ENCODE measurements at regions of chr11 and their contacts with region 1.

Region 1: DNA sequence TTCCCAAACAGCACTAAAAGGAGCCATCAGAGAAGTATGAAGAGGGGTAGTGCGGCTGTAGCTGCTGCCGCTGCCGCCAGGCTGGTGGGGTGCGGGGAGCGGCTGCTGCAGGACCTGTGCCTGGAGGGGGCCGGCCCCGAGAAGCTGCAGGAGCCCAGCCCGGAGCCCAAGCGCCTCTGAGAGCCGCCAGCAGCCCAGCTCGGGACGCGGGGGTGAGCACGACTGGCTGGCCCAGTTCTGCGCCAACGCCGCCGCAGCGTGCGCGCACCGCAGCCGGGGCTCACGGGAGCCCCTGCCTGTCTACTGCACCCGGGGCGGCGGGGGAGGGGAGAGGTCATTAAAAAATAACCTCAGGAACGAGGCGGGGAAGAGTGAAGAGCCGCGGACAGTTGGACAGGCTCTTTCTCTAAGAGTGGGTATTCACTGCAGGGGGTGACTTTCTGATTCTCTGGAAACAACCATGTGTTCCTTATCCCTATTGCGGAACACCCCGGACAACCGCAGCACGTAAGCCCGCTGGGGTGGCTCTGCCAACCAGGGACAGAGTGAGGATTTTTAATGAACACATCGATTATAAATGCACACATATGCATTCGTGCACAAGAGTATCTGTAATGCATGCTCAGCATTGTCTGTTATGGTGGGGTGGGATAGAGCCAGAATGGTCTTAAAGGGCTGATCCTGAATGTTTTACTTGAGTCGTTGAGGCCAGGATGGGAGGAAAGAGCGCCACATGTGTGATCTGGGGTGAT is 453 bp downstream of the GAS2 start:
- DNase-seq: peak; percentile 38 to 95 (median 64)

Region 2: DNA sequence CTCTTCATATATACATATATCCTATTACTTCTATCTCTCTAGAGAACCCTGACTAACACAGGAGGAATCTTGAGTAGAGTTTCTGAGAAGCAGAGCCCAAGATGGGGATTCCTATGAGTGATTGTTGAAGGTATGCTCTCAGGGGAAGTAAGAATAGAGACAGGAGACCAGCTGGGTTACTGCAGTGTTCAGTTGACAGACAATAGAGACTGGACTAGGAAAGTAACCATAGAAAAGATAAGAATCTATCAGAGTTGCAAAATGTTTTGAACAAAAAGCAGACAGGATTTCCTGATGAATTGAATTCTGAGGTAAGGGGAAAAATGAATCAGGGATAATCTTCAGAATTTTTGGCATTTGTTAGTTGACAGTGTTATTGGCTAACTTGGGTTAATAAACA is 274.3 kb before region 1 on chr11:
- intact Hi-C with region 1: no loop called
- DNase-seq: no peak

Region 3: GRCh38 chr11:22543261-22543660 is 123.6 kb before region 1 on chr11:
- intact Hi-C with region 1: no loop called
- DNase-seq: no peak

Region 4: DNA sequence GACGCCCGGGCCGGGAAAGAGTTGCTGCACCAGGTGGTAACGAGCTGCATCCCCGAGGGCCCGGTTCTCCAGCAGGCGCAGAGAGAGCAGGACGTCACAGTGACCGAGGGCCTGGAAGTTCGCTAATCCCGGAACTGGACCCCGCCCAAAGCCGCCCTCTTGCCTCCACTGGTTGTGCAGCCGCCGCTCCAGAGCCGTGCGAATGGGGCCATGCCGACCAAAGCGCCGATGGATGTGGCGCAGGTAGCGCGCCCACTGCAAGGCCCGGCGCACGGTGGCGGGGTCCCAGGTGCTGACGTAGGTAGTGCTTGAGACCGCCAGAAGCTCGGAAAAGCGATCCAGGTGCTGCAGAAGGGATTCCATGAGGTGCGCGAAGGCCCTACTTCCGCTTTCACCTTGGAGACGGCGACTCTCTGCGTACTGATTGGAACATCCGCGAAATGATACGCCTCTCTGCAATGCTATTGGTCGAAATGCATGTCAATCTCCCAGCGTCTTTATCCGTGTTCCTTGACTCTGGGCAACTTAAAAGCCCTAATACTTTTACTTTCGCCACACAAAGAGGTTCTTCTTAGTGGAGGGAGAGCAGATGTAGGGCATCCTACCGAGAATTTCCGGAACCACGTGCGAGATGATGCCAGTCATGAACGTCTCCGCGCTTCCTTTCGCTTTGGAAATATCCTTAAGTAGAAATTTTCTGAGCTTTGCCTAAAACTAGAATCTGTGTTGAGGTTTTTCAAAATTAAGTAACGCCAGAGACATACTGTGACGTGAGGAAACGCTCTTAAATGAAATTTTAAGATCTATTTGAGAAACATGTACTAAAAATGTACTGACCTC is 41.2 kb before region 1 on chr11 and contains the start of gene FANCF:
- intact Hi-C with region 1: loop called (anchors 1 kb)
- DNase-seq: peak; percentile 79 to 97 (median 90)

Region 5: GRCh38 chr11:23041001-23041503 is 374.2 kb after region 1 on chr11:
- intact Hi-C with region 1: no loop called
- DNase-seq: no peak

Measured in posterior cingulate gyrus (tissue), 11 donors.